Left lung (tissue), 14 donors: ENCODE measurements at regions of chr9 and their contacts with region 1.

Region 1: GRCh38 chr9:121059998-121060636 is 10.0 kb upstream of the C5 start:
- DNase-seq: peak in 2 of 4 donors; percentile 56 to 65
- ATAC-seq: peak; percentile 83
- H3K4me3 ChIP-seq: no peak overlapping the region
- H3K27ac ChIP-seq: no peak overlapping the region
- H3K4me1 ChIP-seq: peaks cover 0 to 7% of the 10 kb centered on the region in 2 donors
- H3K27me3 ChIP-seq: no peaks in the 10 kb centered on the region
- CTCF ChIP-seq: peak; percentile 59 to 82

Region 2: GRCh38 chr9:120755827-120756434 is 304.2 kb before region 1 on chr9:
- intact Hi-C with region 1: loop called in 1 of 2 experiments (anchors 10 kb)
- DNase-seq: peak in 2 of 4 donors; percentile 40 to 63
- ATAC-seq: peak; percentile 91
- H3K4me3 ChIP-seq: no peak overlapping the region
- H3K27ac ChIP-seq: peak overlapping the region in 1 of 2 donors; percentile 81
- H3K4me1 ChIP-seq: peaks cover 0 to 49% of the 10 kb centered on the region in 2 donors
- H3K27me3 ChIP-seq: no peaks in the 10 kb centered on the region
- CTCF ChIP-seq: peak; percentile 88 to 89

Region 3: DNA sequence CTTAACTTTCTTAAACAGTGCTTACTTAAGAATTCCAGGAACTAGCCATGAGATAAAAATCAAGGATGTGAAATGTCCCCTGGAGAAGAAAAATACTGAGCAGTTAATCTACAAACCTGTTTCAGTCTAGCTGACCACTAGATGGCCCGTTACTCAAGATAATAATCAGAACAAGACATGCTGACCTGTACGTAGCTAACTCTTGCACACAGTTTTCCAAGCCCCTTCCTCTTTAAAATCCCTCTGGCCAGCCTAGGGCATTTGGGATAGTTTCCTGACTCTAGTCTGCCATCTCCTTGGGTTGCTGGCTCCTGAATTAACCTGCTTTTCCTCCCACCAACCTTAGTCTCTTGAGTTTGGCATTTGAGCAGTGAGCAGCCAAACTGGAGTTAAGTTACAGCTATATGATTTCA is 74.3 kb before region 1 on chr9:
- intact Hi-C with region 1: loop called in 1 of 2 experiments (anchors 10 kb)
- DNase-seq: peak in 1 of 4 donors; percentile 48
- ATAC-seq: peak; percentile 78
- H3K4me3 ChIP-seq: no peak overlapping the region
- H3K27ac ChIP-seq: no peak overlapping the region
- H3K4me1 ChIP-seq: no peaks in the 10 kb centered on the region
- H3K27me3 ChIP-seq: no peaks in the 10 kb centered on the region
- CTCF ChIP-seq: peak in 1 of 2 donors; percentile 35